ENCODE measurements at regions of chr10 and their contacts with region 1.

Region 1: DNA sequence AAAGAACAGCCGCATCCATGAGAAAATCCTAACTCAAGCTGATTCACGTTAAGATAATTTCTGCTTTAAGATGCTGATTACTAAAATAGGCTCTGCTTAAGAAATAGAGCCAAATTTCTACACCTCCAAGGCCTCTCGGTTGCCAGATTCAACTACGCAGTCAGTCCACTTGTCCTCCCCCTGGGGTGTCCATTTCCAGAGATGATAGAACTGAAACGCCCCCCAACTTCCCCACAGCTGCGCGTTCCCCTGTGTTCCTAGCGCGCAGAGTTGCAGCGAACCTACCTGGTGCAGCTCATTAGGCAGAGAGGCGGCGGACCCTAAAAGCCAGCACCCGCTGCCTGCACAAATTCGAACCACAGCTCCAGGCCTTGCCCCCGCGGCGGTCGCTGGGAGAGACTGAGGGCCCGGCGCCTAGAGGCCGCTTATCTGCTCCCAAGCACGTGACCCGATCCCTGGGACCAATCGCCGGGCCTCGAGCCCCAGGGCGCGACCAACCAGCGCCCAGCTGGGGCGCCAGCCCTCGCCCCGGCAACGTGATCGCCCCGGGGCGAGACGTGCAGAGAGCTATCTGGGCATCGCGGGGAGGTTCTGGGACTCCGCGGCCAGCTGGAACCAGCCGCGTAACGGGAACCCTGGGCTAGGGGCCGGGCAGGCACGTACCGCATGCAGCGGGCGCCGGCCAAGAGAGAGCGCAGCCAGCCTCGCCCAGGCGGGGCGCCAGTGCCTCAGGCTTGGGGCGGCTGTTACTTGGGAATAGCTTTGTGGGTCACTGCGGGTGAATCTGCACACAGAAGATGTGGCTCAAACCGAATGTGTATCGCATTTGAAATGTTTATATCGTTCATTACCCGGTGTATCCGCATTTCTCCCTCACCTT is at the start of gene PPP1R3C:
- DNase-seq: peak; percentile 91 to 93
- ATAC-seq: peak; percentile 97 to 98
- H3K4me3 ChIP-seq: peak within 1 kb of the TSS; percentile 85
- H3K27ac ChIP-seq: peak within 1 kb of the TSS; percentile 76 to 84
- H3K4me1 ChIP-seq: peaks cover 31% of the 10 kb centered on the region; the same call in 2 of the 3 replicates
- CTCF ChIP-seq: peak; percentile 36
- EP300 ChIP-seq: no peak
- POLR2A ChIP-seq: peak; percentile 81
- RAD21 ChIP-seq: peak; percentile 61 to 74
- polyA plus RNA-seq, gene PPP1R3C: 19.7 and 20.0 TPM in 2 replicates

Region 2: GRCh38 chr10:91409869-91410637 is 222.9 kb before region 1 on chr10 and contains the start of gene HECTD2:
- CTCF ChIA-PET with region 1: interaction called, 10 read pairs
- POLR2A ChIA-PET with region 1: interaction called, 7 read pairs
- DNase-seq: peak; percentile 52 to 82
- ATAC-seq: peak; percentile 84 to 87
- H3K4me3 ChIP-seq: peak within 1 kb of the TSS; percentile 71
- H3K27ac ChIP-seq: peak within 1 kb of the TSS; percentile 96 to 99
- H3K4me1 ChIP-seq: peaks cover 14% of the 10 kb centered on the region; the same call in 1 of the 3 replicates
- CTCF ChIP-seq: peak; percentile 73
- EP300 ChIP-seq: no peak
- POLR2A ChIP-seq: peak; percentile 9
- RAD21 ChIP-seq: no peak; a peak in 2 of 5 replicates
- polyA plus RNA-seq, gene HECTD2: 13.4 and 13.9 TPM in 2 replicates

Region 3: GRCh38 chr10:91444211-91445182 is 188.4 kb before region 1 on chr10:
- CTCF ChIA-PET with region 1: no interaction called
- POLR2A ChIA-PET with region 1: no interaction called
- DNase-seq: no peak
- ATAC-seq: no peak
- H3K4me3 ChIP-seq: no peak overlapping the region
- H3K27ac ChIP-seq: no peak overlapping the region
- H3K4me1 ChIP-seq: no peaks in the 10 kb centered on the region
- CTCF ChIP-seq: no peak
- EP300 ChIP-seq: no peak
- POLR2A ChIP-seq: no peak
- RAD21 ChIP-seq: no peak

Region 4: DNA sequence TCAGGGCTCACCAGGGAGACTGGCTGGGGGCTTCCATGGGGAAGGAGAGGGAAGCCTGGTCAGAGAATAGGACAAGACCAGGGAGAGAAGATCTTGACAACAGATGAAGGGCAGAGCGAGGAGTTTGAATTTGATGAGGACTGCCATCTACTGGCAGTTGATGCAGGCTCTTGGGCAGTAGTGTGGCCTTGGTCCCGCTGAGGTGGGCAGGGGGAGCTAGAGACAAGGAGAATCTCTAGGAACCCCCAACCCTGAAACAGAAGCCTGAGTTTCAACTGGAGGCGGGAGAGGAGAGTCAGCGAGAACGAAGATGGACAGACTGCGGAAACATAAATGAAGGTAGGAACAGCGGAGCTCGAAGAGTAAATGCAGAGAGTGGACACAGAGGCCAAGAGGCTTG is 81.1 kb before region 1 on chr10:
- CTCF ChIA-PET with region 1: interaction called, 38 read pairs
- POLR2A ChIA-PET with region 1: no interaction called
- DNase-seq: peak; percentile 35 to 76
- ATAC-seq: peak; percentile 79 to 96
- H3K4me3 ChIP-seq: no peak overlapping the region
- H3K27ac ChIP-seq: peak overlapping the region in 1 of 2 experiments; percentile 39; a peak in 1 of 6 replicates
- H3K4me1 ChIP-seq: peaks cover 10% of the 10 kb centered on the region
- CTCF ChIP-seq: peak; percentile 68
- EP300 ChIP-seq: no peak
- POLR2A ChIP-seq: no peak
- RAD21 ChIP-seq: peak; percentile 80 to 83

Region 5: GRCh38 chr10:91597197-91597881 is 35.6 kb before region 1 on chr10:
- CTCF ChIA-PET with region 1: interaction called, 9 read pairs
- POLR2A ChIA-PET with region 1: interaction called, 37 read pairs
- DNase-seq: peak in 1 of 2 experiments; percentile 77
- ATAC-seq: peak; percentile 65 to 75
- H3K4me3 ChIP-seq: no peak overlapping the region
- H3K27ac ChIP-seq: peak overlapping the region; percentile 93 to 94
- H3K4me1 ChIP-seq: peaks cover 59% of the 10 kb centered on the region
- CTCF ChIP-seq: no peak
- EP300 ChIP-seq: no peak; a peak in 1 of 5 replicates
- POLR2A ChIP-seq: no peak
- RAD21 ChIP-seq: 0 out of 5 replicates have a peak, but pooled peaks of 1 of the 2 experiments have one; percentile 7

Region 6: DNA sequence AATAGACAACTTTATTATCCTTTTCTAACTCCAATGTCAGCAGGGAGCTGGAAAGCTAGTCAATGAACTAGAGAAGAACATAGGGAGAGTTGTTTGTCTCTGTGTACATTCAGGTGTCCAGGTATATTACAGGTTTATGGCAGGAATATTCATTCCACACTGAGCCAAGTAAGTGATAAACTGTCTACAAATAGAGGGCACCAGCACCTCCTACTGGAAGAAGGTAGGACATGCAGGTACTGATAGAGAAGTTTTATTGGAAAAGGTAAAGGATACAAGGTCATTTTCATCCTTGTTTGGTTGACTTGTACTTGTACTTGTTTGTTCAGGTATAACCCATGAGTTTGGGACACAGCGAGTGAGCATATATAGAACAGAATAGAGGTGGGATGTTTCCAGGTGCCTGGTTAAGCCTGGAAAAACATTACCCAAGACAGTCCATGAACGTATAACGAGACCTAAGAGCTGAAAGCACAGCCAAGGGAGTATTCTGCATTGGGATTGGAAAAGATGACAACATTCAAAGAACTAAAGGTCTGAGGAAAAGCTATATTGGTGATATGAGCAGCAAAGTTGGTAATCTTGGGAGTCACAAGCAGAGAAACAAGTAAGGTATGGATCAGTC is 61.4 kb after region 1 on chr10:
- CTCF ChIA-PET with region 1: interaction called, 11 read pairs
- POLR2A ChIA-PET with region 1: no interaction called
- DNase-seq: peak; percentile 54 to 58
- ATAC-seq: peak in 1 of 2 experiments; percentile 78; a peak in 3 of 6 replicates
- H3K4me3 ChIP-seq: no peak overlapping the region
- H3K27ac ChIP-seq: no peak overlapping the region
- H3K4me1 ChIP-seq: peaks cover 5% of the 10 kb centered on the region; the same call in 1 of the 3 replicates
- CTCF ChIP-seq: peak; percentile 75
- EP300 ChIP-seq: no peak
- POLR2A ChIP-seq: no peak
- RAD21 ChIP-seq: peak; percentile 79 to 91

Region 7: GRCh38 chr10:91838199-91838598 is 205.3 kb after region 1 on chr10:
- CTCF ChIA-PET with region 1: no interaction called
- POLR2A ChIA-PET with region 1: no interaction called
- DNase-seq: no peak
- ATAC-seq: no peak
- H3K4me3 ChIP-seq: no peak overlapping the region
- H3K27ac ChIP-seq: no peak overlapping the region
- H3K4me1 ChIP-seq: no peaks in the 10 kb centered on the region
- CTCF ChIP-seq: no peak
- EP300 ChIP-seq: no peak
- POLR2A ChIP-seq: no peak
- RAD21 ChIP-seq: no peak